PC-3 (cell line): ENCODE measurements at regions of chr15 and their contacts with region 1.

Region 1: GRCh38 chr15:60326824-60327654 is 70.7 kb downstream of the ANXA2 start:
- DNase-seq: peak; percentile 79
- ATAC-seq: peak; percentile 59
- H3K4me3 ChIP-seq: no peak overlapping the region
- H3K27ac ChIP-seq: no peak overlapping the region
- H3K4me1 ChIP-seq: no peaks in the 10 kb centered on the region; the same call in 1 of the 2 replicates
- H3K27me3 ChIP-seq: peaks cover 46% of the 10 kb centered on the region
- CTCF ChIP-seq: peak; percentile 83

Region 2: DNA sequence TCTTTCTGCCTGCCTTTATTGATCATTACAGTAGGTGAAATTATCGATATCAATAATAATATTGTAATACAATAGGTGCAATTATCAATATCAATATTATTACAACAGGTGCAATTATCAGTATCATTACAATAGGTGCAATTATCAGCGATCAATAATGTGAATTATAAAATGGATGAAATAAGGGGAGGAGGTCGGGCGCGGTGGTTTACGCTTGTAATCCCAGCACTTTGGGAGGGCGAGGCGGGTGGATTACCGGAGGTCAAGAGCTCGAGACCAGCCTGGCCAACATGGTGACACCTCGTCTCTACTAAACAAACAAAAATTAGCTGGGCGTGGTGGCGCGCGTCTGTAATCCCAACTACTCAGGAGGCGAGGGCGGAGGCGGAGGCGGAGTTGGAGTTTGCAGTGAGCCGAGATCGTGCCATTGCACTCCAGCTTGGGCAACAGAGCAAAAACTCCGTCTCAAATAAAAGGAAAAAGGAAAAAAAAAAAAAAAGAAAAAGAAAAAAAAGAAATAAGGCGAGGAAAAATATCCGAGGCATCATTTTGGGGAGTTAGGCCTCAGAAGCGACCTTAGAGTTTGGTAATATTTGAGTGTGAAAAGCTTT is 637.3 kb before region 1 on chr15:
- CTCF ChIA-PET with region 1: interaction called, 5 read pairs
- POLR2A ChIA-PET with region 1: interaction called, 4 read pairs
- intact Hi-C with region 1: loop called (anchors 1 kb)
- DNase-seq: peak; percentile 52
- ATAC-seq: peak; percentile 63
- H3K4me3 ChIP-seq: peak overlapping the region; percentile 98
- H3K27ac ChIP-seq: no peak overlapping the region
- H3K4me1 ChIP-seq: peaks cover 19% of the 10 kb centered on the region
- H3K27me3 ChIP-seq: no peaks in the 10 kb centered on the region
- CTCF ChIP-seq: no peak

Region 3: GRCh38 chr15:59917504-59918157 is 409.4 kb before region 1 on chr15:
- CTCF ChIA-PET with region 1: no interaction called
- POLR2A ChIA-PET with region 1: no interaction called
- intact Hi-C with region 1: loop called (anchors 2 kb)
- DNase-seq: peak; percentile 77
- ATAC-seq: peak; percentile 98
- H3K4me3 ChIP-seq: no peak overlapping the region
- H3K27ac ChIP-seq: no peak overlapping the region
- H3K4me1 ChIP-seq: peaks cover 11% of the 10 kb centered on the region; the same call in 1 of the 2 replicates
- H3K27me3 ChIP-seq: peaks cover 24% of the 10 kb centered on the region
- CTCF ChIP-seq: peak; percentile 74

Region 4: GRCh38 chr15:60134609-60135008 is 192.4 kb before region 1 on chr15:
- CTCF ChIA-PET with region 1: no interaction called
- POLR2A ChIA-PET with region 1: no interaction called
- intact Hi-C with region 1: loop called (anchors 10 kb)
- DNase-seq: peak; percentile 32
- ATAC-seq: peak; percentile 51
- H3K4me3 ChIP-seq: no peak overlapping the region
- H3K27ac ChIP-seq: no peak overlapping the region
- H3K4me1 ChIP-seq: no peaks in the 10 kb centered on the region
- H3K27me3 ChIP-seq: peaks cover 10% of the 10 kb centered on the region; the same call in 1 of the 2 replicates
- CTCF ChIP-seq: peak; percentile 61

Region 5: DNA sequence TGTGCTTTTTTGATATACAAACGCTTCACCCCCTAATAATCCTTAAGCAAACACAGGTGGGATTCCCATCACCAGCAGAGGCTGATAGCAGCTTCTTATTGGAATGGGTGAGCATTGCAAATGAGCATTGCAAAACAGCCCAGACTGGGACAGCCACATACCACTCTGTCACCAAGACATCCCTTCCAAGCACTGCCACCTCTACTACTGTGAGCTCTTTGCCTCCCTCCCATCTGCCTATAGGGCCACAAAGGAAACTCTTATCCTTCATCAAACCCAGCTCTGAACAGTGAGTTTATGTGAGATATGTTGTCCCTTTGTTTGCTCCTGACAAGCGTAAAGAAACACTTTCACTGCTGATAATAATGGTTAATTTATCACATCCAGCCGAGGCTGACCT is 75.8 kb before region 1 on chr15:
- CTCF ChIA-PET with region 1: no interaction called
- POLR2A ChIA-PET with region 1: no interaction called
- intact Hi-C with region 1: no loop called
- DNase-seq: no peak
- ATAC-seq: no peak
- H3K4me3 ChIP-seq: no peak overlapping the region
- H3K27ac ChIP-seq: no peak overlapping the region
- H3K4me1 ChIP-seq: peaks cover 10% of the 10 kb centered on the region; the same call in 1 of the 2 replicates
- H3K27me3 ChIP-seq: peaks cover 39% of the 10 kb centered on the region
- CTCF ChIP-seq: no peak

Region 6: GRCh38 chr15:60407415-60407805 is 80.4 kb after region 1 on chr15:
- CTCF ChIA-PET with region 1: no interaction called
- POLR2A ChIA-PET with region 1: no interaction called
- intact Hi-C with region 1: no loop called
- DNase-seq: peak; percentile 89
- ATAC-seq: peak; percentile 64
- H3K4me3 ChIP-seq: peak overlapping the region; percentile 50
- H3K27ac ChIP-seq: peak overlapping the region; percentile 97
- H3K4me1 ChIP-seq: peaks cover 53% of the 10 kb centered on the region
- H3K27me3 ChIP-seq: no peaks in the 10 kb centered on the region
- CTCF ChIP-seq: no peak

Region 7: GRCh38 chr15:60464836-60465630 is 138.0 kb after region 1 on chr15:
- CTCF ChIA-PET with region 1: no interaction called
- POLR2A ChIA-PET with region 1: no interaction called
- intact Hi-C with region 1: no loop called
- DNase-seq: peak; percentile 43
- ATAC-seq: peak; percentile 65
- H3K4me3 ChIP-seq: no peak overlapping the region
- H3K27ac ChIP-seq: no peak overlapping the region
- H3K4me1 ChIP-seq: peaks cover 5% of the 10 kb centered on the region
- H3K27me3 ChIP-seq: no peaks in the 10 kb centered on the region
- CTCF ChIP-seq: no peak

Region 8: GRCh38 chr15:60520825-60521368 is 193.9 kb after region 1 on chr15:
- CTCF ChIA-PET with region 1: no interaction called
- POLR2A ChIA-PET with region 1: no interaction called
- intact Hi-C with region 1: loop called (anchors 1 kb)
- DNase-seq: peak; percentile 74
- ATAC-seq: peak; percentile 51
- H3K4me3 ChIP-seq: 0 out of 2 replicates have a peak overlapping the region, but pooled peaks have one; percentile 46
- H3K27ac ChIP-seq: peak overlapping the region; percentile 98
- H3K4me1 ChIP-seq: peaks cover 60% of the 10 kb centered on the region
- H3K27me3 ChIP-seq: no peaks in the 10 kb centered on the region
- CTCF ChIP-seq: peak; percentile 91